SK-N-SH (cell line): ENCODE measurements at regions of chr10 and their contacts with region 1.

Region 1: DNA sequence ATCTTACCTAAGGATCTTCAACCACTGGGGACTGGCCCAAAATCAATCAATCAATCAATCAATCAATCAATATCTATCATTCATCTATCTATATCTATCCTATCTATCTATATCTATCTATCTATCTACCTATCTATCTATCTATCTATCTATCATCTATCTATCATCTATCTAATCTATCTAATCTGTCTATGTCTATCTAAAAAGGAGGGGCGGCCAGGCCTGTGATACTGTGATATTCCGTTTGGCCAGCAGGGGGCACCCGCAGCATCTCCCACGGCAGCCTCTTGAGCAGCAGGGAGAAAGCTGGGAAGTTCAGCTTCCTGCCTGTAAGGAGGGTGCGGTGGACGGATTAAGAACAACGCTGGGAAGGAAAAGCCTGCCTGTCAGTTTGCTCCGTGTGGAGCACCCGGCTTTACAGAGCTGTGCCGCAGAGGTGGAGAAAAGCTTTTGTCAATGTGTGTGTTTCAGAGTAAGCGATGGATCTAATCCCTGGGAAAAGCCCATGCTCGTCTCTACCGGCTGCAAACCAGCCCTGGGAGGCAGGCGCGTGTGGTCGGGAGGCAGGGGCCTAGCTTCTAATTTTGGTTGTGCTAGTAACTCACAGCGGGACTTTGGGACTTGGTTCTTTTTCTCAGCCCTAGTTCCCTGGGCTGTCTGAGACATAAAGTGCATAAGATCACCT is 125.0 kb downstream of the SH2D4B start:
- DNase-seq: peak; percentile 77
- H3K4me3 ChIP-seq: peak overlapping the region; percentile 24 to 46; a peak in 3 of 4 replicates
- H3K27ac ChIP-seq: no peak overlapping the region
- H3K4me1 ChIP-seq: peaks cover 0 to 2% of the 10 kb centered on the region in 2 experiments; a peak in 1 of 4 replicates
- H3K27me3 ChIP-seq: no peaks in the 10 kb centered on the region
- CTCF ChIP-seq: peak; percentile 88
- EP300 ChIP-seq: no peak
- RAD21 ChIP-seq: peak; percentile 70

Region 2: DNA sequence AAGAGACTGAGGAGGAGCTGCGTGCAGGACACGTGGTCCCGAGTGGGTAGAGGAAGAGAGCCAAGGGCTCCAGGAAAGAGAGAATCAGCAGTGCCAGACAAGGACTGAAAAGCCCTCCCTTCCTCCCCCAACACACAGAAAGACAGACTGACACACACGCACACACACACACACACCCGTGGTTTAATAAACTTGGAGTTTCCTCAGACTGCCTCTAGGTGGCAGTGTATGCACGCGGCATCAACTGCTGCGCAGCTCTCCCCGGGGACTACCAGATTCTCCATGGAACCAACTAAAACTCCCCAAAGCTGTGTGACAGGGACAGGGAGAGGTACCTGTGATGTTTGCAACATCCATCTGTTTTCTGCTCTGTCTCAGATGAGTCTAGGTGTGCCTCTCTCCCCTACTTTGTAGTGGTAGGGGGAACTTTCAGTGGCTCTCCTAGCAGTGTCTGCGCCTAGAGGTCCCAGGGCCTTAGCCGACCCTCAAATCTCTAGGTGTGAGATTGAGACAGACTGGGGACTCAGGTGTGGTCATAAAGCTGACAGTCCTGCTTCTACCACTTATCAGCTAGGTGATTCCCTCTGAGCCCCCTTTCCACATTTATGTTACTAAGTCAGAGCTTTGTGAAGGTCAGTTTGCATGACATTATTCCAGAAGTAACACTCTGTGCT is 217.9 kb before region 1 on chr10:
- CTCF ChIA-PET with region 1: interaction called, 25 read pairs
- POLR2A ChIA-PET with region 1: no interaction called
- DNase-seq: peak; percentile 58
- H3K4me3 ChIP-seq: no peak overlapping the region
- H3K27ac ChIP-seq: no peak overlapping the region
- H3K4me1 ChIP-seq: peaks cover 11 to 22% of the 10 kb centered on the region in 2 experiments; a peak in 3 of 4 replicates
- H3K27me3 ChIP-seq: no peaks in the 10 kb centered on the region
- CTCF ChIP-seq: peak; percentile 64
- EP300 ChIP-seq: no peak
- RAD21 ChIP-seq: peak; percentile 85

Region 3: DNA sequence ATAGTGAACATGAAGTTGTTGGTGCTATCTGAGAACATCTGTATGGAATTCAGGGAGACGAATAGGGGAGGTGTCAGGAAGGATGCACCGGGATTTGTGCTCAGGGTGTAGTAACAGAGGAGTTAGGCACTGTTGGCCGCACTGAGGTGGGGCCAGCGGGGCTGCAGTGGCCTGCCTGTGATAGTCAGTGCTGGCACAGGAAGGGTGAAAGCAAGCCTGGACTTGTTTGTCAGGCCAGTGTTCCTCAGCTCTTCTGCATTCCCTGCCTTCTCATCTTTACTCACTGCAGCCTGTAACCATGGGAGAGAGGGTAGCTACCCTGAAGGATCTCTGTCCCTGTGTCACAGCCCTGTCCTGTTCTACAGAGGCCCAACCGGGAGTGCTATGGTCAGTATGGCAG is 43.7 kb before region 1 on chr10:
- CTCF ChIA-PET with region 1: interaction called, 15 read pairs
- POLR2A ChIA-PET with region 1: no interaction called
- DNase-seq: no peak
- H3K4me3 ChIP-seq: no peak overlapping the region
- H3K27ac ChIP-seq: no peak overlapping the region
- H3K4me1 ChIP-seq: no peaks in the 10 kb centered on the region
- H3K27me3 ChIP-seq: no peaks in the 10 kb centered on the region
- CTCF ChIP-seq: no peak
- EP300 ChIP-seq: no peak
- RAD21 ChIP-seq: no peak

Region 4: DNA sequence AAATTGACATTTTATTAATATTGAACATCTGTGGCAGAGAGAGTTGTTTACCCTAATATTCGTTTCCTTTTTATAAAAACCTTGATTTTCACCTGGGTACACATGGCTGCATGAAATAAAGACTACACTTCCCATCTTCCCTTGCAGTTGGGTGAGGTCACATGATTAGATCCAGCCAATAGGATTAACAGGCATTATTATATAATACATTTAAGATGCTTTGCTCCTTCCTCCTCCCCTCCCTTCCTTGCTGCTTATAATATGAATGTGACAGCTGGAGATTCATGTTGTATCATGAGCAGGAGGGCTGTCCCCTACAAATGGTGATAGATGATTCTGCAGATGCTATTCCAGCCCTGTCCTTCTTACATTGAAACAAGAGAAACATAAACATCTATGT is 21.5 kb after region 1 on chr10:
- CTCF ChIA-PET with region 1: interaction called, 46 read pairs
- POLR2A ChIA-PET with region 1: no interaction called
- DNase-seq: peak; percentile 58
- H3K4me3 ChIP-seq: no peak overlapping the region
- H3K27ac ChIP-seq: no peak overlapping the region
- H3K4me1 ChIP-seq: no peaks in the 10 kb centered on the region; a peak in 1 of 4 replicates
- H3K27me3 ChIP-seq: no peaks in the 10 kb centered on the region
- CTCF ChIP-seq: no peak
- EP300 ChIP-seq: no peak
- RAD21 ChIP-seq: no peak

Region 5: DNA sequence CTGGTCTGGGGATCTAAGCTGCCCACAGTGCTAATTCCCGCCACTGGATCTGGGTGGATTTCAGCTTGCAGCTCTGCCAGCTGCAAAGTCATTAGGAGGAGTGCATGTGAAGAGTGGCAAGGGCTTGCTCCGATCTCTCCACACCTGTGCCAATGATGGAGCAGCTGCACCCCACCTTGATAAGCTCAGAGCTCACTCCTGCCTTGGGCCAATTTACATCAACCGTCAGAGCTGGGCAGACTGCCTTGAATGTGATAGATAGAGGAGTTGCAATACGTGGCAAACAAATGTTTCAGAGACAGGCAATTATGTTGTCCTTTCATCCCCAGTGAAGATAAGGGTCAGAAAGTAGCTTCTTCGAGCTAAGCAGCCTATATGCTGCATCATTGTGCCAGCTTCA is 254.9 kb after region 1 on chr10:
- CTCF ChIA-PET with region 1: interaction called, 185 read pairs
- POLR2A ChIA-PET with region 1: no interaction called
- DNase-seq: no peak
- H3K4me3 ChIP-seq: no peak overlapping the region
- H3K27ac ChIP-seq: no peak overlapping the region
- H3K4me1 ChIP-seq: peaks cover 0 to 3% of the 10 kb centered on the region in 2 experiments; a peak in 1 of 4 replicates
- H3K27me3 ChIP-seq: no peaks in the 10 kb centered on the region
- CTCF ChIP-seq: no peak
- EP300 ChIP-seq: no peak
- RAD21 ChIP-seq: no peak

Region 6: DNA sequence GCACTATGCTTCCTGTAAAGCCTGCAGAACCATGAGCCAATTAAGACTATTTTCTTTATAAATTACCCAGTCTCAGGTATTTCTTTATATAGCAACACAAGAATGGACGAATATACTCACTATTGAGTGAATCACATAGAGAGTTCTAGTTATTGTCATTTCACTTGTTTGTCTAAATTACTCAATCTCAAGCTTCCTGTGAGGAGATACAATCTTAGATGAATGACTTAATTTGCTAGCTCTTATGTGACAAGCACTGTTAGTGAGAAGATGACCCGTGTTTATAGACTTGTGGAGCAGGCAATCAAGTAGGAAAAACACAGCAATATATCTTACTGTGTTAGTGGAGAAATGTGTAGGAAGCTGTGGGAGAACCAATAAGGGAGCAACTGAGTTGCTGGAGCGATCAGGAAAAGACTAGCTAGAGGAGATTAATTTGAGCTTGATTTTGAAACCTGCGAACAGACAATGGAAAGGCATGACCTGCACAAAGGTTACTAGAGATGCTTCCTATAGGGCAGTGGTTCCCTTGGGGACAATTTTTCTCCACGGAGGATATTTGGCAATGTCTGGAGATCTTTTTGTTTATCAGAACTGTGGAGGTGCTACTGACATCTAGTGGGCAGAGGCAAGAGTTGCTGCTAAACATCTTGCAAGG is 356.1 kb after region 1 on chr10:
- CTCF ChIA-PET with region 1: interaction called, 11 read pairs
- POLR2A ChIA-PET with region 1: no interaction called
- DNase-seq: peak; percentile 1
- H3K4me3 ChIP-seq: 0 out of 4 replicates have a peak overlapping the region, but pooled peaks of 1 of the 2 experiments have one; percentile 43
- H3K27ac ChIP-seq: no peak overlapping the region
- H3K4me1 ChIP-seq: no peaks in the 10 kb centered on the region
- H3K27me3 ChIP-seq: no peaks in the 10 kb centered on the region
- CTCF ChIP-seq: peak; percentile 54
- EP300 ChIP-seq: no peak
- RAD21 ChIP-seq: peak; percentile 63